PC-9 (cell line): ENCODE measurements at regions of chr7 and their contacts with region 1.

Region 1: DNA sequence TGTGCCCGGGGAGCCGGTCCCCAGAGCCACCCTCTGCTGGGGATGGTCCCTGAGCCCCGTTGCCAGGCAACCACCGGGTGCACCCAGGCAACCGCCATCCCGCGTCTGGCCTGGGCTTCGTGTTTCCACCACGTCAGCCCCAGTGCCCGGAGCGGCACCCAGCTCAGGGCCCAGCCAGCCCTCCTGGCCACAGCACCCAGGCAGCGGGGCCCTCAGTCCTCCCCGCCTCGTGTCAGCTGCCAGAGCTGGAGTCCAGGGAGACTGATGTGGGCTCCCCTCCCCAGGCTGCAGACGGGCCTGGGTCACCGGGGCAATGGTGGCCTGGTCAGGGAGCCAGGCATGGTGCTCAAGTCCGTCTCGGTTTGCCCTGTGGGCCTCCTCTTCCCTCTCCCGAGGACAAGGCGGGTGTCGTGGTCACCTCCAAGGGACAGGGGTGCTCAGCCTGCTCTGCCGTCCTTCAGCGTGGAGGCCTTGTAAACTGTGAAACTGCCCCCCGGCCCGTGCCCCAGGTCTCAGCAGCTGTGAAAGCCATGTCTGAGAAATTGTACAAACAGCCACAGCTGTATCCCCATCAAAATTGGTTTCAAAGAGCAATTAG is 72.5 kb downstream of the MICALL2 start:
- DNase-seq: no peak
- H3K4me3 ChIP-seq: no peak overlapping the region
- H3K27ac ChIP-seq: no peak overlapping the region
- H3K4me1 ChIP-seq: no peaks in the 10 kb centered on the region
- H3K27me3 ChIP-seq: peaks cover 98% of the 10 kb centered on the region
- CTCF ChIP-seq: no peak

Region 2: DNA sequence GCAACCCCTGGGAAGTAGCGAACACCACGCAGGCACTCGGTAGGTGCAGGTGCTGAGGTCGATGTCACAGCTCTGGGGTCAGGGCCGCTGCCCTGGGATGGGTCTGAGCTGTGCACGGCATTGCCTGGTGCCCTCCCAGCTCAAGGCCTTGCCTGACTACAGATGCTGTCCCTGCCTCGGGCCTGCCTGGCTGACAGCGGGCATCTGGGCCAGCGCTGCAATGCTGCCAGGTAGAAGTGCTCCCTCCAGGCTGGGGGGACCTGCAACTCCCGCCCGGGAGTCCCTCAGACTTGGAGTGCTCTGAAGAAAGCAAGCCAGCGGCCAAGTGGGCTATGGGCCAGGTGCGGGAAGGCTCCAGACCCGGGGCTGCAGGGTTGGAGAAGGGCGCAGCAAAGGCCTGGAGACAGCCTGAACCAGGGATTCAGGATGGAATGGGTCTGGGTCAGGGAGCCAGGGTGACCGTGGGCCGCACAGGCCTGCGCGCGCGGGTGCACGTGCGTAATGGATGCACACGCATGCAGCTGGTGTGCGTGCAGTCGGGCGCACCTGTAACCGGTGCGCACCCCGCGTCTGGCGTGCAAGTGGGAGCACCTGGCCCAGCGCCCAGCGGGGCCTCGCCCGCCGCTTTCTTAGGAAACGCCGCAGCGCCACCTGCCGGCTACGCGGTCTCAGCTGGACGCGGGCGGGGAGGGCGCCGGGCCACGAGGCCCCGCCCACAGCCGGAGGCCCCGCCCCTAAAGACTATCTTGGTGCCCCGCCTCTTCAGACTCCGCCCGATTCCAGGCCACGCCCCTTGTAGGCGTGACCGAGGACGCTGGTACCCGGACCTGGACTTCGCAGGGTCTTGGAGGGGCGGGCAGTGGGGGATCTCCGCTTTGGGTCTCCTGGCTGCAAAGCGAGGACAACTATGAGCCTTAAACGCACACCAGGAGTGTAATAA is 25.9 kb after region 1 on chr7:
- CTCF ChIA-PET with region 1: interaction called, 24 read pairs
- POLR2A ChIA-PET with region 1: no interaction called
- intact Hi-C with region 1: no loop called
- DNase-seq: peak; percentile 65 to 91
- H3K4me3 ChIP-seq: no peak overlapping the region; the same call in 1 of the 2 replicates
- H3K27ac ChIP-seq: no peak overlapping the region
- H3K4me1 ChIP-seq: no peaks in the 10 kb centered on the region
- H3K27me3 ChIP-seq: peaks cover 65% of the 10 kb centered on the region
- CTCF ChIP-seq: peak; percentile 90

Region 3: DNA sequence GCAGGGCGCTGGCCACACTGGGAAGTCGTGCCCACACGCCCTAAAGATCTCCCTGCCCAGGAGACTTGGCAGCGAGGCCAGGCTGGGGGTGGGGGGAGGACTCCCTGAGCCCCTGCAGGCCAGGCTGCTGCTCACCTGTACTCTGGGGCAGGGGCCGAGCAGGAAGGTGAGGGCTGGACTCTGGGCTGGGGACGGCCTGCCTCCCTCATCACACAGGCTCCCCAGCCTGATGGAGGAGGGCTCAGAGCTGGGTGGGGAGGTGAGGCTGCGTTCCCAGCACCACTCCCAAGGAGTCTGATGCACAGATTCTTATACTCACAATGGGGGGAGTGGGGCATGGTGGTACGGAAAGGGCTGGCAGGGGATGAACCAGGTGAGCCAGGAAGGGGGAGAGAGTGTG is 354.5 kb after region 1 on chr7:
- CTCF ChIA-PET with region 1: interaction called, 14 read pairs
- POLR2A ChIA-PET with region 1: no interaction called
- intact Hi-C with region 1: no loop called
- DNase-seq: no peak
- H3K4me3 ChIP-seq: no peak overlapping the region
- H3K27ac ChIP-seq: no peak overlapping the region
- H3K4me1 ChIP-seq: no peaks in the 10 kb centered on the region
- H3K27me3 ChIP-seq: peaks cover 57% of the 10 kb centered on the region
- CTCF ChIP-seq: no peak